Activated B cell treated with CpG ODN at 0.5 μM for 24 hours (primary cell): ENCODE measurements at regions of chr6 and their contacts with region 1.

Region 1: DNA sequence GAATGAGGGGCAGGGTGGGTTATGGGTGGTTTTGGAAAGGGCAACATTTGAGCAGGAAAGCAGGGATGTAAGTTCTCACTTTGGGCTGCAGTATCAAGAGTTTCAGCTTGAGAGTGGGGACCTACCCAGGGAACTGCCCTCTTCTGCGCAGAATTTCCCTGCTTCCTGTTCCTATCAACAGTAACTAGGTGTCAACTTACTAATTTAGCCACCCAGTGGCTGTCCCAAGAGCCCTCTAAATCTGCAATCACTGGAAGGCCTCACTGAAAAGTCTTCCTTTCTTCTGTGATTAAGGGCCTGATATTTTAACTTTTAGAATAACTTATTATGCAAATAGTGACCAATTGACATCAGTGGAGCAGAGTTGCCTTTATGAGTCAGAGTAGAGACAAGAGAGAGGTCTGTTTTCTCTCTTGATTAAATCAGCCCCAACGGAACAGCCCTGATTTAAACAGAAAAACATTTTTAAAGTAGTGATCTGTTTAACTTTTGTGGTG is 118.2 kb upstream of the RIPOR2 start:
- DNase-seq: no peak
- ATAC-seq: peak; percentile 76
- H3K4me3 Mint-ChIP-seq: peak overlapping the region; percentile 75
- H3K27ac Mint-ChIP-seq: peak overlapping the region; percentile 96
- H3K4me1 Mint-ChIP-seq: peaks cover 96% of the 10 kb centered on the region
- H3K27me3 Mint-ChIP-seq: no peaks in the 10 kb centered on the region
- CTCF ChIP-seq: no peak

Region 2: DNA sequence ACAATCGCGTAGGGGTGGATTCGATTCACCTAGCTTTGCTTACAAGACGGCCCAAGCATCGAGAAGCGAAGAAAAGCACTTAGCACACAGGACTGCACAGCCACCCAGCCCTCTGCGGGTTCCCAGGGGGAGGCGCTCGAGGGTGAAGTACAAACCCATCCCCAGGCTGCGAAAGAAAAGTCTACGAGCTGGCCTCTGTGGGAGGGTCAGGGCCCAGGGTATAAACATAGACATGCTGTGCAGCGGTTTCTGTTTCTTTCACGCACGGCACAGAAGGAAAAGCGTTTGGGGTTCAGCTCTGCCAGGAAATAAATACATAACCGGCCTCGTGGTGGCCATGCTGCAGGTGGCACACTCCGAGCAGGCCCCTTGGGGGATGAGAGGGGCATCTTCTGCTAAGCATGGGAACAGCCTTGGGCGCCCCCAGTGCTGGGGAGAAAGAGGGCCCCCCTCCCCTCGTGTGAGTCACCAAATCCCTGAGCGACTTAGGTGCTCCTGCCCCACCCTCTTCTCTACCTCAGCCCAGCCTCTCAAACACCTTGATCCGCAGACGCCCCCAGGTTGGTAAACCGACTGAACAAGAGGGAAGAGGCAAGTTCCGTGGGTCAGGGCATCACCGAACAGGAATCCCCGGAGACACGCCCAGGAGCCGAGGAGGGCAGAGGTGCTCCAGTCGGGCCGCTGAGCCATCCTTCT is 26.6 kb before region 1 on chr6:
- CTCF ChIA-PET with region 1: interaction called, 31 read pairs
- POLR2A ChIA-PET with region 1: interaction called, 32 read pairs
- intact Hi-C with region 1: loop called (anchors 1 kb)
- DNase-seq: peak; percentile 59
- ATAC-seq: peak; percentile 90
- H3K4me3 Mint-ChIP-seq: peak overlapping the region; percentile 77
- H3K27ac Mint-ChIP-seq: peak overlapping the region; percentile 83
- H3K4me1 Mint-ChIP-seq: peaks cover 58% of the 10 kb centered on the region
- H3K27me3 Mint-ChIP-seq: no peaks in the 10 kb centered on the region
- CTCF ChIP-seq: no peak

Region 3: GRCh38 chr6:25035527-25036435 is 18.1 kb before region 1 on chr6:
- CTCF ChIA-PET with region 1: interaction called, 8 read pairs
- POLR2A ChIA-PET with region 1: interaction called, 36 read pairs
- intact Hi-C with region 1: no loop called
- DNase-seq: no peak
- ATAC-seq: peak; percentile 45
- H3K4me3 Mint-ChIP-seq: peak overlapping the region; percentile 78
- H3K27ac Mint-ChIP-seq: peak overlapping the region; percentile 77
- H3K4me1 Mint-ChIP-seq: peaks cover 77% of the 10 kb centered on the region
- H3K27me3 Mint-ChIP-seq: no peaks in the 10 kb centered on the region
- CTCF ChIP-seq: no peak